Activated B cell treated with CpG ODN at 0.5 μM for 24 hours (primary cell): ENCODE measurements at regions of chr3 and their contacts with region 1.

Region 1: GRCh38 chr3:184543843-184544512 is 17.6 kb upstream of the EPHB3 start:
- DNase-seq: peak; percentile 56
- ATAC-seq: peak; percentile 85
- H3K4me3 Mint-ChIP-seq: no peak overlapping the region
- H3K27ac Mint-ChIP-seq: no peak overlapping the region
- H3K4me1 Mint-ChIP-seq: peaks cover 12% of the 10 kb centered on the region
- H3K27me3 Mint-ChIP-seq: peaks cover 21% of the 10 kb centered on the region
- CTCF ChIP-seq: peak; percentile 79

Region 2: DNA sequence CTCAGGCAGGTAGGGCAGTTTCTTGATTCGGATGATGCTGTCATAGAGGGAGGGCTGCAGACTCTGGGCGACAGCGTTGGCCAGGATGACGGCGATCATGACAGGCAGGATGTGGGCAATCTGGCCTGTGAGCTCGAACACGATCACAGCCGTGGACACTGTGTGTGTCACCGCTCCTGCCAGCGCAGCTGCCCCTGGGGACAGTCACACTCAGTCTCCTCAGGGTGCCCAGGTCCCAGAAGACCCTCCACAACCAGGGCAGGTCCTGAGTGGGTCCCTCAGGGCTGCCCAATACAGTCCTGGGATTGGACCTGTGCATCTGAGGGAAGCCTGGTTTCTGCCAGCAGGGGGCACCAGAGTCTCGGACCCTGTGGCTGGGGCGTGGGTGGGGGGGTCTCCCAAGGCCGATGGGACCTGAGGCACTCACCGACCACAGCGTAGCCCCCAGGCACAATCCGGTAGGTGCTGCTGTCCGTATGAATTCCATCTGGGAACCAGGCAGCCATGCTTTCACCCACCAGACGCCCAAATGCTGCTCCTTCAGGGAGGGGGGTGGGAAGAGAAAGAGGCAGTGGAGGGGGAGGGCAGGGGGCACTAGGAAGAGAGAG is 189.8 kb before region 1 on chr3:
- CTCF ChIA-PET with region 1: interaction called, 6 read pairs
- POLR2A ChIA-PET with region 1: no interaction called
- intact Hi-C with region 1: loop called (anchors 1 kb)
- DNase-seq: peak; percentile 57
- ATAC-seq: peak; percentile 87
- H3K4me3 Mint-ChIP-seq: no peak overlapping the region
- H3K27ac Mint-ChIP-seq: no peak overlapping the region
- H3K4me1 Mint-ChIP-seq: no peaks in the 10 kb centered on the region
- H3K27me3 Mint-ChIP-seq: no peaks in the 10 kb centered on the region
- CTCF ChIP-seq: no peak

Region 3: GRCh38 chr3:184371570-184372018 is 172.4 kb before region 1 on chr3:
- CTCF ChIA-PET with region 1: interaction called, 39 read pairs
- POLR2A ChIA-PET with region 1: no interaction called
- intact Hi-C with region 1: loop called (anchors 1 kb)
- DNase-seq: no peak
- ATAC-seq: peak; percentile 97
- H3K4me3 Mint-ChIP-seq: no peak overlapping the region
- H3K27ac Mint-ChIP-seq: no peak overlapping the region
- H3K4me1 Mint-ChIP-seq: peaks cover 2% of the 10 kb centered on the region
- H3K27me3 Mint-ChIP-seq: peaks cover 15% of the 10 kb centered on the region
- CTCF ChIP-seq: no peak

Region 4: GRCh38 chr3:184417619-184418327 is 126.2 kb before region 1 on chr3:
- CTCF ChIA-PET with region 1: interaction called, 3 read pairs
- POLR2A ChIA-PET with region 1: no interaction called
- intact Hi-C with region 1: loop called (anchors 1 kb)
- DNase-seq: peak; percentile 65
- ATAC-seq: peak; percentile 100
- H3K4me3 Mint-ChIP-seq: no peak overlapping the region
- H3K27ac Mint-ChIP-seq: no peak overlapping the region
- H3K4me1 Mint-ChIP-seq: peaks cover 2% of the 10 kb centered on the region
- H3K27me3 Mint-ChIP-seq: no peaks in the 10 kb centered on the region
- CTCF ChIP-seq: peak; percentile 71

Region 5: DNA sequence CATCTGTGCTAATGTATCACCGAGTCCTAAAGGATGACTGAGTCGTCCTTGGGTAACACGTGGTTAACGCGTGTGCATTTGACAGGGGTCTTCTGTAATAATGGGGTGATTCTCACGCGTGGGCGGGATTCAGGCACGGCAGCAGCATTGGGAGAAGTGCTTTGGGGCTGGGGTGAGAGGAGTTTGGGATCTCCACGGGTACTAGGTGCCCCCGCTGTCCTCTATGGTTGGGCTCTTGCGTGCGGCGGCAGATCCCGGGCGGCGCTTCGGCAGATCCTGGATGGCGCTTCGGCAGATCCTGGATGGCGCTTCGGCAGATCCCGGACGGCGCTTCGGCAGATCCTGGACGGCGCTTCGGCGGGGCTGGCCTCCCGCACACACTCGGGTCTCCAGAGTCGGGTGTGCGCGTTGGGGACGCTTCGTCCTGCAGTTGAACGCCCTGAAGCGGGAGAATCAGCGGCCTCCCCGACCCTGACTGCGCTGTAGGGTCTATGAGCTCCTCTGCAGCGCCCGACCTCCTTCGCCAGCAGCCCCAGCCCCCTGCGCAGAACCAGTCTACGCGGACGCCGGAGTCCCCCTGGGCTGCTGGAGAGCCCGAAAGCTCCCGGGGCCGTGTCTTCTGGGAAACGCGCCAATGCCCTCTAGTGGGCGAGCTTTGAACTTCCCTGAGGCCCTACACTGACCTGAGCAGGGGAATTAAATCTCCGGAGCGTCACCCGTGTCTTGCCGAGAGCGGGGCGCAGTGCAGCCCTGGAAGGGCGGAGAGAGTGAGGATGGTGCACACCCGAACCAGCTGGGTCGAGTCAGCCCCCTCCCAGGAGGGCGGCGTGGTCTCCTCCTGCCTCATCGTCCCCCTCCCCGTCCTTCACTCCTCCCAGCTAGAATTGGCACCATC is 30.5 kb before region 1 on chr3:
- CTCF ChIA-PET with region 1: interaction called, 11 read pairs
- POLR2A ChIA-PET with region 1: no interaction called
- intact Hi-C with region 1: no loop called
- DNase-seq: peak; percentile 75
- ATAC-seq: peak; percentile 100
- H3K4me3 Mint-ChIP-seq: peak overlapping the region; percentile 57
- H3K27ac Mint-ChIP-seq: no peak overlapping the region
- H3K4me1 Mint-ChIP-seq: peaks cover 11% of the 10 kb centered on the region
- H3K27me3 Mint-ChIP-seq: peaks cover 41% of the 10 kb centered on the region
- CTCF ChIP-seq: no peak

Region 6: GRCh38 chr3:184568924-184569829 is 25.2 kb after region 1 on chr3:
- CTCF ChIA-PET with region 1: no interaction called
- POLR2A ChIA-PET with region 1: no interaction called
- intact Hi-C with region 1: no loop called
- DNase-seq: no peak
- ATAC-seq: no peak
- H3K4me3 Mint-ChIP-seq: peak overlapping the region; percentile 53
- H3K27ac Mint-ChIP-seq: no peak overlapping the region
- H3K4me1 Mint-ChIP-seq: peaks cover 8% of the 10 kb centered on the region
- H3K27me3 Mint-ChIP-seq: peaks cover 37% of the 10 kb centered on the region
- CTCF ChIP-seq: no peak

Region 7: GRCh38 chr3:184964880-184965279 is 420.9 kb after region 1 on chr3:
- CTCF ChIA-PET with region 1: no interaction called
- POLR2A ChIA-PET with region 1: no interaction called
- intact Hi-C with region 1: no loop called
- DNase-seq: no peak
- ATAC-seq: no peak
- H3K4me3 Mint-ChIP-seq: no peak overlapping the region
- H3K27ac Mint-ChIP-seq: no peak overlapping the region
- H3K4me1 Mint-ChIP-seq: peaks cover 2% of the 10 kb centered on the region
- H3K27me3 Mint-ChIP-seq: no peaks in the 10 kb centered on the region
- CTCF ChIP-seq: no peak

Region 8: DNA sequence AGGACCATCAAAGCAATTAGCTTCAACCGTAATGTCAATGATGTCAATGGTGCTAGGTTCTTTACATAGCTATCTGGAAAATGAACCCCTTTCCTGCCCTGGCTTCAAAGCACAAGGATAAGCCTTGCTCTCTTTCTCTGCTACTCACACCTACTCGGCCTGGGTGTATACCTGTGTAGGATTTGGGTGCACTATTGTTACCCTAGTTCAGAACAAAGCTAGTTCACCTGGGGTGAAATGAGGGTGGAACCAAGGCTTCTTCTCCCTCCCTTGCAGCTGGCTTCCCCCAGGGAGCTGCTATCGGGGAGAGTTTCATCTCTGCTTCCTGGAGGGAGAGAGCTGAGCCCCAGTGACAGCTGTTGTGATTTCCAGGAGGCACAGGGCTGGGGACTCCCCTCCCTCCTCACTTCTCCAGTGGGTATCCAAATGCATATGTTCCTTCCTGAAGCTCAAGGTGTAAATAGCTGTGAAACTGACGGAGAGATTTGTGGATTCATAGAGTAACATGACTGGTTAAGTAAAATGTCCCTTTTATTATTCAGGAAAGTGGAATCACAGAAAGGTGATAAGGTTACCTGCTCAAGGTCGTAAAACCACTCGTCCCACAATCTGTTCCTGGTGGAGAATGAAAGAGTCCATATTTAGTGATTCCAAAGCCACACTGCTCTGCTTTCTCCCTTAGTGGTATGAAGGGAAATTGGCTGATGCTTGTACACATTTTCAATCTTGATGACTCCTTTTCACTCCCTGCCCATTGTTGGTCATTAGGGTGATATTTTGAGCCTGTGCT is 620.6 kb after region 1 on chr3:
- CTCF ChIA-PET with region 1: no interaction called
- POLR2A ChIA-PET with region 1: no interaction called
- intact Hi-C with region 1: no loop called
- DNase-seq: no peak
- ATAC-seq: no peak
- H3K4me3 Mint-ChIP-seq: no peak overlapping the region
- H3K27ac Mint-ChIP-seq: no peak overlapping the region
- H3K4me1 Mint-ChIP-seq: no peaks in the 10 kb centered on the region
- H3K27me3 Mint-ChIP-seq: peaks cover 20% of the 10 kb centered on the region
- CTCF ChIP-seq: no peak

Region 9: GRCh38 chr3:186374376-186374775 is 1830.4 kb after region 1 on chr3:
- CTCF ChIA-PET with region 1: no interaction called
- POLR2A ChIA-PET with region 1: no interaction called
- intact Hi-C with region 1: no loop called
- DNase-seq: no peak
- ATAC-seq: no peak
- H3K4me3 Mint-ChIP-seq: no peak overlapping the region
- H3K27ac Mint-ChIP-seq: no peak overlapping the region
- H3K4me1 Mint-ChIP-seq: no peaks in the 10 kb centered on the region
- H3K27me3 Mint-ChIP-seq: peaks cover 4% of the 10 kb centered on the region
- CTCF ChIP-seq: no peak